GM10248 (cell line): ENCODE measurements at regions of chr11 and their contacts with region 1.

Region 1: GRCh38 chr11:67118801-67119584 is at the start of gene KDM2A:
- DNase-seq: peak; percentile 99
- CTCF ChIP-seq: peak; percentile 26

Region 2: DNA sequence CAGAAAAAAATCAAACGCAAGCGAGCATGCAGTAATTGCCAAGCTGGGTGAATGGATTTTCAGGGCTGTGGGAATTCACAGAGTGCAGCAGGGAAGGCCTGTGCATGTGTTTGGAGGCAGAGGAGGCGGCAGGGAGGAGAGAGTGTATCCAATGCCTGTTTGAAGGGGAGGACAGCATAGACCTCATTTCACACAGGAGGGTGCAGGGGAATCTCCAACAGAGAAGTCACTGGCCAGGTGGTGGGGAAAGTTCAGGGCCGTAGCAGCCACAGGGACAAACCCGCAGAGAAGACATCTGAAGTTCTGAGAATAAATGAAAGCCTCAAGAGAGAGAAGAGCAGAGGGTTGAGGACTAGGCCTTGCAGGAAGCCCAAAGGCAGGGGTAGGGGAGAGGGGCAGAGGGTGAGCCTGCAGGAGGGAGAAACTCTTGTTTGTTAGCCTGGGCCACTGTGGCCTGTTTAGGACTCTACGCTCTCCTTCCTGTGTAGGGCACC is 19.1 kb before region 1 on chr11:
- CTCF ChIA-PET with region 1: interaction called, 12 read pairs
- POLR2A ChIA-PET with region 1: no interaction called
- DNase-seq: peak; percentile 65
- CTCF ChIP-seq: no peak

Region 3: GRCh38 chr11:67230406-67230805 is 111.4 kb after region 1 on chr11:
- CTCF ChIA-PET with region 1: no interaction called
- POLR2A ChIA-PET with region 1: no interaction called
- DNase-seq: no peak
- CTCF ChIP-seq: no peak